Natural killer cell (primary cell): ENCODE measurements at regions of chr3 and their contacts with region 1.

Region 1: DNA sequence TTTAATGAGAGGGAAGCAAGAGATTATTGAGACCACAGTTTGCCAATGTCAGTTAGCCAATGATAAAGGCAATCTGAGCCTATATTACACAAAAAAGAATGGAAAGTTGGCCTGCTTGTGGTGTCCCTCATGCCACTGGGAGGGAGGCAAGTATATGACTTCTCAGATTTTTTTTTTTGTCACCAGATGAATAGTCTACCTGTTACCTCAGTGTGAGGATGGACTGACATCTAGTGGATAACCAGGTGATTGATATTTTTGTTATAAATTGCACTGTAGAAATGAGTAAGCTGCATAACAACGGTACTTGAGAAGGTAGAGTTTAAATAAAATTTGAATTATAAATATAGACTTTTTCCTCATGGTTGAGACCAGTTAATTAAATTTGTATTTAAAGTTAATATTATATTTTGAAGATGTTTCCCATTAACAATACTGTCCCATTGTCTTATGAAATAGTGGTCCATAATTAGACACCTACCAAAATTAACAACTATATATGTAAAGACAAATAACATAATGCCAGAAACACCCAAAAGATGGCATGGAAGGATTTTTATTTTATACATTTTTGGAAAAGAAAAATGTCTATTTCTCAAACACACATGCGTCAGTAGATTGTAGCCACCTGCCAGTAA is 237.8 kb upstream of the GADL1 start:
- DNase-seq: peak in 1 of 2 donors; percentile 66
- ATAC-seq: peak in 1 of 3 donors; percentile 59
- H3K4me3 ChIP-seq: no peak overlapping the region
- H3K4me3 Mint-ChIP-seq: no peak overlapping the region
- H3K27ac ChIP-seq: no peak overlapping the region
- H3K27ac Mint-ChIP-seq: no peak overlapping the region
- H3K4me1 ChIP-seq: no peaks in the 10 kb centered on the region
- H3K4me1 Mint-ChIP-seq: no peaks in the 10 kb centered on the region
- H3K27me3 ChIP-seq: no peaks in the 10 kb centered on the region
- H3K27me3 Mint-ChIP-seq: no peaks in the 10 kb centered on the region
- CTCF ChIP-seq: peak; percentile 49

Region 2: DNA sequence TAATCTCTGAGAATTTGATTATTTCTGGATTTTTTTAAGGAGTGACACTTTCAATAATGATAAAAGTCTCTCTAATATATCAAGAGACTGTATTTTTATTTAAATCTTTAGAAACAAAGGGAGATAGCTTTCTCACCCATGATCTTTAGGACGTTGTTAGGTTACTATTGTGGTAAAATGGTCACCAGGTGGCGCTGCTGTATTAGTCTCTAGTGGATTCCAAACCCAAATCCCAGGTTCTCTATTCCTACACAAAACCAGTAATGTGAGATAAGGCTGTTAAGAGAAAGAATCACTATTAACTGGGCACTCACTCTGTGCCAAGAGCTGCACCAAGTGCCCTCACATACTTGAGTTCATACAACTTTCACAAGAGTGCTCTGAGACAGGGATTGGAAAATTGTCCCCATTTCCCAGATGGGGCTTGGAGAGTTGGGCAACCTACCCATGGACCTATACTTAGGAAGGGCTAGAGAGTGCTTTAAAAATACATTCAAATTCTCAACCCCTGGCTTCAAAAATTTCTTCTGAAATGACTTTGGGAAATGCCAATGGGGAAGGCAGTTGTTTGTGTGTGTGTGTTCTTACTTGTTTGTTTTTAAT is 1119.2 kb before region 1 on chr3:
- intact Hi-C with region 1: loop called (anchors 10 kb)
- DNase-seq: peak; percentile 18 to 69
- ATAC-seq: peak in 1 of 3 donors; percentile 59
- H3K4me3 ChIP-seq: no peak overlapping the region
- H3K4me3 Mint-ChIP-seq: no peak overlapping the region
- H3K27ac ChIP-seq: no peak overlapping the region
- H3K27ac Mint-ChIP-seq: no peak overlapping the region
- H3K4me1 ChIP-seq: no peaks in the 10 kb centered on the region
- H3K4me1 Mint-ChIP-seq: no peaks in the 10 kb centered on the region
- H3K27me3 ChIP-seq: no peaks in the 10 kb centered on the region
- H3K27me3 Mint-ChIP-seq: no peaks in the 10 kb centered on the region
- CTCF ChIP-seq: peak; percentile 74